ENCODE measurements at regions of chr22 and their contacts with region 1.

Region 1: GRCh38 chr22:24951942-24952836 is at the start of gene KIAA1671:
- DNase-seq: peak; percentile 92
- ATAC-seq: peak; percentile 99
- total RNA-seq, gene KIAA1671: 12.6 TPM

Region 2: DNA sequence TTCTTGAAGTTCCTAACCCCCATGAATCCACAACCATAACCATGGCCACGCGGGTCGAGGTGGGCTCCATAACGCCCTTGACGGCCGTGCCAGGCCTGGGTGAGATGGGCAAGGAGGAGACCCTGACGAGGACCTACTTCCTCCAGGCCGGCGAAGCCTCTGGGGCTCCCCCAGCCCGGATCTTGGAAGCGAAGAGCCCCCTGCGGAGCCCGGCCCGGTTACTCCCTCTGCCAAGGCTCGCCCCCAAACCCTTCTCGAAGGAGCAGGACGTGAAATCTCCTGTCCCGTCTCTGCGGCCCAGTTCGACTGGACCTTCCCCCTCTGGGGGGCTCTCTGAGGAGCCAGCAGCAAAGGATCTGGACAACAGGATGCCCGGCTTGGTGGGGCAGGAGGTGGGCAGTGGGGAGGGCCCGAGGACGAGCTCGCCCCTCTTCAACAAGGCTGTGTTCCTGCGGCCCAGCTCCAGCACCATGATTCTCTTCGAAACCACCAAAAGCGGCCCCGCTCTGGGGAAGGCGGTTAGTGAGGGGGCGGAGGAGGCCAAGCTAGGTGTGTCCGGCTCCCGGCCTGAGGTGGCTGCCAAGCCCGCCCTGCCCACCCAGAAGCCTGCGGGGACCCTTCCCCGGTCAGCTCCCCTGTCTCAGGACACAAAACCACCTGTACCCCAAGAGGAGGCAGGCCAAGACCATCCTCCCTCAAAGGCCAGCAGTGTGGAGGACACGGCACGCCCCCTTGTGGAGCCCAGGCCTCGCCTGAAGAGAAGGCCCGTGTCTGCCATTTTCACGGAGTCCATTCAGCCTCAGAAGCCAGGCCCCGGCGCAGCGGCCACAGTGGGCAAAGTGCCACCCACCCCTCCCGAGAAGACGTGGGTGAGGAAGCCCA is 76.0 kb after region 1 on chr22:
- intact Hi-C with region 1: loop called (anchors 5 kb)
- DNase-seq: peak; percentile 60
- ATAC-seq: no peak

Region 3: DNA sequence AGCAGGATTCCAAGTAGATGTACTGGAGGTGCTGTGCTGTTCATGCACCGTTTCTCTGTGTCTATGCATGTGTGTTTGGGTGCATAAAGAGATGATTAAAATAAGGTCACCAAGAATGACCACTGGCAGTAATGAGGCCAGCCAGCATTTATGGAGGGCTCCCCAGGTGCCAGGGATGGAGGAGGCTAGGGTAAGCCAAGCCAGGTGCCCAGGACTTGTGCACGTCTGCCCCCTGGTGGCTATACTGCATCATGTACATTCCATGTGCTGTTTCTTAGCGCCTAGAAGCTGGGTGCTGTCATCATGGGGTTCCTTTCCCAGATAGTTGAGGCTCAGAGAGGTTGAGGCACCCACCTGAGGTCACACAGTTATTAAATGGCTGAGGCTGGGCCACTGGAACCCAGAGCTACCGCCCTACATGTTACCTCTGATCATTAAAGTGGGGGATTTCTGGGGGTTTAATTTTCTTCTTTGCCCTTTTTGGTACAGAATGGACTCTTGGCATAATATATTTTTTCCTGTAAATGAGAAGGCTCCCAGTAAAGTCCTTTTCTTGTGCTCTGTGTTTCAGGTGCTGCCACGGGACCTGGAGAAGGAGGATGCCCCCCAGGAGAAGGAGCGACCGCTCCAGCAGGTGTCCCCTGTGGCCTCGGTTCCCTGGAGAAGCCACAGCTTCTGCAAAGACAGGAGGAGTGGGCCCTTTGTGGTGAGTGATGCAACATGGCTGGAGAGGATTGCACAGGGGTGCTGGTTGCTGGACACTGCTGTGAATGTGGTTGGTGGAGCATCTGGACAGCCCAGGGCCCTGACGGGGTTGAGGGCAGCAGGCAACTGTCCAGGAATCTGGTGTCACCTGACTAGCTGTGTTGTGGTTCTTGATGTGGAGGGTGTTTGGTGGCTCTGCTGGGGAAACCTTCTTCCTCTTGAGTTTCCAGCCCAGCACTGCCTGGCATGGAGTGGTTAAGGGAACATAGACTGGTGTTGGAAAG is 96.8 kb after region 1 on chr22:
- intact Hi-C with region 1: loop called (anchors 1 kb)
- DNase-seq: peak; percentile 61
- ATAC-seq: peak; percentile 84